K562 (cell line): ENCODE measurements at regions of chr6 and their contacts with region 1.

Region 1: DNA sequence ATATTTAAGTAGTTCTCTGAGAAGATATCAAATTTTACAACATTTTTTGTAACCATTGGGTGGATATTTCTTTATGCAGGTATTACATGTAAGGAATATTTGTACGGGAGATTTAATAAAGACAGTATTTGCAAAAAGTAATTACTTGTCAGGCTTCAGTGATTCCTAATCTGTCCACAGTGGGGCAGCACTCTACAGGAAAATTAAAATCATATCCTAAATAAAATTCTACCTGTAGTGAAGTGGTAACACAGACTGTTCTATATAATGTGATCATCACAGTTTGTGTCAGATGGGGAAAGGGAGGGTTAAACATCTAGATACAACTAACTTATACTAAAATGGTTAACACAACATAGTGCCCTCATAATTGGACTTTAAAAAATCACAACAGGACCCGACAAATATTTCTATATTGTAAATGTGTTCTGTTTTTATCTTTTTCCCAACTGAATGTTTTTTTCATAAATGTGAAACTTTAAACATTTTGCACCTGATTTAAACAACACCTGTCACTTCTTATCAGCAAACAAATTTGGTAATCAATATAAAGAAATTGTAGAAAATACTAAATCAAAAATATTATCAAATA is 145.6 kb upstream of the MANEA start:
- DNase-seq: peak; percentile 18 to 51 (median 22)
- ATAC-seq: no peak
- H3K4me3 ChIP-seq: no peak overlapping the region
- H3K27ac ChIP-seq: no peak overlapping the region
- H3K4me1 ChIP-seq: no peaks in the 10 kb centered on the region
- H3K27me3 ChIP-seq: no peaks in the 10 kb centered on the region
- CTCF ChIP-seq: peak in 2 of 3 experiments; percentile 32 to 72; a peak in 2 of 6 replicates
- EP300 ChIP-seq: no peak
- POLR2A ChIP-seq: no peak
- RAD21 ChIP-seq: peak; percentile 85 to 88

Region 2: GRCh38 chr6:95530176-95530819 is 98.6 kb after region 1 on chr6:
- CTCF ChIA-PET with region 1: no interaction called
- POLR2A ChIA-PET with region 1: no interaction called
- in situ Hi-C with region 1: no loop called
- intact Hi-C with region 1: loop called (anchors 10 kb)
- DNase-seq: no peak
- ATAC-seq: no peak
- H3K4me3 ChIP-seq: no peak overlapping the region
- H3K27ac ChIP-seq: no peak overlapping the region
- H3K4me1 ChIP-seq: no peaks in the 10 kb centered on the region
- H3K27me3 ChIP-seq: no peaks in the 10 kb centered on the region
- CTCF ChIP-seq: no peak
- EP300 ChIP-seq: no peak
- POLR2A ChIP-seq: no peak
- RAD21 ChIP-seq: no peak